ENCODE measurements at regions of chr16 and their contacts with region 1.

Region 1: GRCh38 chr16:2155091-2156021 is at the start of gene TRAF7:
- H3K4me3 ChIP-seq: peak within 1 kb of the TSS; percentile 77
- H3K27ac ChIP-seq: peak within 1 kb of the TSS; percentile 64
- H3K4me1 ChIP-seq: no peaks in the 10 kb centered on the region
- CTCF ChIP-seq: no peak

Region 2: GRCh38 chr16:1950047-1950446 is 205.3 kb before region 1 on chr16:
- CTCF ChIA-PET with region 1: no interaction called
- POLR2A ChIA-PET with region 1: no interaction called
- H3K4me3 ChIP-seq: no peak overlapping the region
- H3K27ac ChIP-seq: no peak overlapping the region
- H3K4me1 ChIP-seq: no peaks in the 10 kb centered on the region
- CTCF ChIP-seq: no peak

Region 3: GRCh38 chr16:1964506-1965395 is 190.6 kb before region 1 on chr16 and contains the start of gene RPS2:
- CTCF ChIA-PET with region 1: no interaction called
- POLR2A ChIA-PET with region 1: interaction called, 23 read pairs
- H3K4me3 ChIP-seq: peak within 1 kb of the TSS; percentile 94
- H3K27ac ChIP-seq: peak within 1 kb of the TSS; percentile 100
- H3K4me1 ChIP-seq: no peaks in the 10 kb centered on the region; the same call in 1 of the 2 replicates
- CTCF ChIP-seq: no peak; the same call in 1 of the 2 replicates

Region 4: DNA sequence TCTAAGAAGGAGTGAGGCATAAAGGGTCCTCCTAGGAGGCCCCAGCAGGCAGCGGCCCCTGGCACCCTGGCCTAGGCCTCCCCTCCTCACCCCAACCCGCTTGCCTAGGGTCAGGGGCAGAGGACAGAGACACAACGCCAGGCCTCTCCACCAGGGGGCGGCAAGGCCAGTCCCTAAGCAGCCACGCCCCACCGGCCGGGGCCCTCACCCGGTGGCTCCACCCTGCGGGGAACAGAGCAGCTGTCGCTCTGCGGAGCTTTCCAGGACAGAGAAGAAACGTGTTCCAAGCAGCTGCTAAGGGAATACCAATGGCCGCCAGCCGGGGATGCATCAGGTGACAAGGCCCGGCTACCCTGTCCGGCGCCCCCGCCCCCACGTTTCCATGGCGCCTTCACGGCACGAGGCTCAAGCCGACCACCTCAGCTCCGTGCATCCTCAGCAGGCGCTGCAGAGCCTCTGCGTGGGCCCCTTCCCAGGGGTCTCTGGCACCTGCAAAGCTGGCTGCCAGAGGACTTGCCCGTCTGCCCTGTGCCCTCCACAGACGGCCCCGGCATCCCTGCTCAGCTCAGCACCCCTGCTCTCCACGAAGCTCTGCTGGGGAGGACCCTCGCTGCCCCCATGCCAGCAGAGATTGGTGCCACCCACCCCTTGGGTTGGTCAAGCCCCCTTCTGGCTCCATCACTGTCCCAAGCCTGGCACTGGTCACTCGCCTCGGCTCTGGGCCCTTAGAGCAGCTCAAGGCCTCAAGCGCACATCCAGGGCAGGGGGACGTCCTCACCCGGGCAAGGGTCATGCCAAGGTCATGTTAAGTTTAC is 151.3 kb before region 1 on chr16:
- CTCF ChIA-PET with region 1: interaction called, 6 read pairs
- POLR2A ChIA-PET with region 1: interaction called, 19 read pairs
- H3K4me3 ChIP-seq: no peak overlapping the region
- H3K27ac ChIP-seq: peak overlapping the region; percentile 61; the same call in 1 of the 2 replicates
- H3K4me1 ChIP-seq: peaks cover 27% of the 10 kb centered on the region
- CTCF ChIP-seq: peak; percentile 99

Region 5: DNA sequence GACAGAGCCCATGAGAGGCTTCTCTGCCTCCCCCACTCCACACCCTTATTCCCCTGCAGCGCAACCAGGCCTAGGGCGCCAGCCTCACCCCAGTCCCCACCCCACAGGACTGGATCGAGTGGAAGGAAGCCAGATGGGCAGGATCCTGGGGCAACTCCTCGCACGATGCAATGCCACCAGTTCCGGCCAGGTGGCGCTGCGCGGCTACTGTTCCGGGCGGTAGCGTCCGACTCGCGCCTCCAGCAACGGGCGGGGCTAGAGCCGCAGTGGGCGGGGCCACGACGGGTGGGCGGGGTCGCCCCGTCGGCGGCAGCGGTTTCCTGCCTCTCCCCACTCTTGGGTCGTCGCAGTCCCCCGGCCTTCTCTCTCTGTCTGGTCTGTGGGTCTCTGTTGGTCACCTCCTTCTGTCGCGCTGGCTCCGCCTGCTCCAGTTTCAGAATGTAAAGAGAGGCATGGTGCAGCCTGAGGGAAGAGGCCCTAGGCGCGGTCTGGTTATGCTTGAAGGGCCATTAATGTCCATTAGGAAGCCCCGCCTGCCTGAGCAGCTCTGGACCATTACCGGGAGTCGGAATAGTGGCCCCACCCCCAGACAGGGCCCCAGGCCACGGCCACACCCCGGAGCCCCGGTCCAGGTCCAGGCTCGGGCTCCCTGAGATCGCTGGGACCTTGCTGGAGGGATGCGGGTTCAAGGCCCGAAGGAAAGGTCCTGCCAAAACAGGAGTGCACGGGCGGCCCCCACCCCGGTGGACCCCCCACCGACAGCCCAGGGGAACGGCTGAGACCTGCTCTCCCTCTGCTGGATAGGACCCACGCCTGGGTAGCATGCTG is 132.0 kb before region 1 on chr16:
- CTCF ChIA-PET with region 1: interaction called, 20 read pairs
- POLR2A ChIA-PET with region 1: interaction called, 18 read pairs
- H3K4me3 ChIP-seq: peak overlapping the region; percentile 13
- H3K27ac ChIP-seq: no peak overlapping the region
- H3K4me1 ChIP-seq: peaks cover 3% of the 10 kb centered on the region; the same call in 1 of the 2 replicates
- CTCF ChIP-seq: peak; percentile 98

Region 6: GRCh38 chr16:2121853-2122252 is 33.5 kb before region 1 on chr16:
- CTCF ChIA-PET with region 1: no interaction called
- POLR2A ChIA-PET with region 1: interaction called, 12 read pairs
- H3K4me3 ChIP-seq: no peak overlapping the region
- H3K27ac ChIP-seq: no peak overlapping the region
- H3K4me1 ChIP-seq: peaks cover 10% of the 10 kb centered on the region
- CTCF ChIP-seq: no peak

Region 7: GRCh38 chr16:2187212-2187611 is 31.9 kb after region 1 on chr16:
- CTCF ChIA-PET with region 1: interaction called, 3 read pairs
- POLR2A ChIA-PET with region 1: interaction called, 12 read pairs
- H3K4me3 ChIP-seq: no peak overlapping the region
- H3K27ac ChIP-seq: no peak overlapping the region
- H3K4me1 ChIP-seq: no peaks in the 10 kb centered on the region
- CTCF ChIP-seq: no peak

Region 8: GRCh38 chr16:2213817-2214720 is 58.7 kb after region 1 on chr16:
- CTCF ChIA-PET with region 1: no interaction called
- POLR2A ChIA-PET with region 1: interaction called, 19 read pairs
- H3K4me3 ChIP-seq: peak overlapping the region; percentile 78
- H3K27ac ChIP-seq: peak overlapping the region; percentile 94
- H3K4me1 ChIP-seq: 0 out of 2 replicates have a peak, but pooled peaks cover 2% of the 10 kb centered on the region
- CTCF ChIP-seq: peak; percentile 28; the same call in 1 of the 2 replicates